ENCODE measurements at regions of chr2 and their contacts with region 1.

Region 1: DNA sequence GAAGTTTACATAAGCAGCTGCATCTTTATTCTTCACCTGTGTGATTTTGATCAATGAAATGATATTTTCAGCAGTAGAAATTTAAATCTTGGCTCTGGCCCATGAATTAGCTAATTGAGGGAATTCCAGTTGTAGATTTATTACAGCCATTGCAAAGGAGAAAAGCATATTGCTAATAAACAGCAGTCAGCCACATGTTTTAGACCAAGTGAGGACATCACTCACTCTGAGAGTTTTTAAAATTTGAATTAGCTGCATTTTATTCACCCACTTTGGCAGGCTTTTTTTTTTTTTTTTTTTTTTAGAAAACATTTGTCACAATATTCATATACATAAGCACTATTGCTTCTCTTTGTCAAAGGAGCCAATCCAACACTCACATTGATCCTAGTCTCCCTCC is 479.4 kb upstream of the VRK2 start:
- DNase-seq: no peak
- ATAC-seq: no peak
- H3K4me3 Mint-ChIP-seq: no peak overlapping the region
- H3K27ac Mint-ChIP-seq: no peak overlapping the region
- H3K4me1 Mint-ChIP-seq: no peaks in the 10 kb centered on the region
- H3K27me3 Mint-ChIP-seq: no peaks in the 10 kb centered on the region
- CTCF ChIP-seq: no peak

Region 2: GRCh38 chr2:57330447-57330846 is 236.8 kb before region 1 on chr2:
- CTCF ChIA-PET with region 1: no interaction called
- POLR2A ChIA-PET with region 1: no interaction called
- intact Hi-C with region 1: no loop called
- DNase-seq: no peak
- ATAC-seq: no peak
- H3K4me3 Mint-ChIP-seq: no peak overlapping the region
- H3K27ac Mint-ChIP-seq: no peak overlapping the region
- H3K4me1 Mint-ChIP-seq: no peaks in the 10 kb centered on the region
- H3K27me3 Mint-ChIP-seq: no peaks in the 10 kb centered on the region
- CTCF ChIP-seq: no peak

Region 3: GRCh38 chr2:57696016-57696415 is 128.8 kb after region 1 on chr2:
- CTCF ChIA-PET with region 1: no interaction called
- POLR2A ChIA-PET with region 1: interaction called, 10 read pairs
- intact Hi-C with region 1: no loop called
- DNase-seq: no peak
- ATAC-seq: no peak
- H3K4me3 Mint-ChIP-seq: no peak overlapping the region
- H3K27ac Mint-ChIP-seq: no peak overlapping the region
- H3K4me1 Mint-ChIP-seq: peaks cover 6% of the 10 kb centered on the region
- H3K27me3 Mint-ChIP-seq: no peaks in the 10 kb centered on the region
- CTCF ChIP-seq: no peak

Region 4: DNA sequence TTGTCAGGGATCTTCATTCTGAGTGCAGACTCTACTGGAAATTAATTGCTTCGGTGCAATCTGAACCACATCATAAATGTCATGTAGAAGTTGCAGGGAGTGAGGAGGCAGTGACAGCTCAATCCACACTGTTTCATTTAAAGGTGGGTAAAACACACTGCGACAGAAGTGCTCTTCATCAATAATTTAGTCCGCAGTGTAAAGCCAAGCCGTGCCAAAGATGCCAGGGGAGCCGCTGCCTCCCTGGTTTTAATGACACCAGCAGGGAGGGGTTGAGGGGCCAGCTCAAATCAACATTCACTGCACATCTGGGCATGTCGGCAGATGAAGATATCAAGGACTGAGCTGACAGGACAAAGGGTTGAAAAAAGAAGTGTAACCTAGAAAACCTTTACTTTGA is 173.6 kb after region 1 on chr2:
- CTCF ChIA-PET with region 1: no interaction called
- POLR2A ChIA-PET with region 1: no interaction called
- intact Hi-C with region 1: no loop called
- DNase-seq: no peak
- ATAC-seq: no peak
- H3K4me3 Mint-ChIP-seq: no peak overlapping the region
- H3K27ac Mint-ChIP-seq: no peak overlapping the region
- H3K4me1 Mint-ChIP-seq: no peaks in the 10 kb centered on the region
- H3K27me3 Mint-ChIP-seq: no peaks in the 10 kb centered on the region
- CTCF ChIP-seq: no peak

Region 5: GRCh38 chr2:59148924-59149670 is 1581.9 kb after region 1 on chr2:
- CTCF ChIA-PET with region 1: no interaction called
- POLR2A ChIA-PET with region 1: no interaction called
- intact Hi-C with region 1: no loop called
- DNase-seq: no peak
- ATAC-seq: no peak
- H3K4me3 Mint-ChIP-seq: no peak overlapping the region
- H3K27ac Mint-ChIP-seq: no peak overlapping the region
- H3K4me1 Mint-ChIP-seq: peaks cover 3% of the 10 kb centered on the region
- H3K27me3 Mint-ChIP-seq: no peaks in the 10 kb centered on the region
- CTCF ChIP-seq: no peak

Measured in activated B cell treated with CpG ODN at 0.5 μM for 24 hours (primary cell).